Activated CD8-positive, alpha-beta T cell treated with anti-CD3 and anti-CD28 coated beads for 36 hours (primary cell): ENCODE measurements at regions of chr10 and their contacts with region 1.

Region 1: GRCh38 chr10:67779465-67780203 is 58.4 kb downstream of the DNAJC12 start:
- DNase-seq: peak; percentile 79
- ATAC-seq: peak; percentile 75
- H3K4me3 Mint-ChIP-seq: no peak overlapping the region
- H3K27ac Mint-ChIP-seq: no peak overlapping the region
- H3K4me1 Mint-ChIP-seq: peaks cover 17% of the 10 kb centered on the region
- H3K27me3 Mint-ChIP-seq: no peaks in the 10 kb centered on the region
- CTCF ChIP-seq: peak; percentile 88

Region 2: DNA sequence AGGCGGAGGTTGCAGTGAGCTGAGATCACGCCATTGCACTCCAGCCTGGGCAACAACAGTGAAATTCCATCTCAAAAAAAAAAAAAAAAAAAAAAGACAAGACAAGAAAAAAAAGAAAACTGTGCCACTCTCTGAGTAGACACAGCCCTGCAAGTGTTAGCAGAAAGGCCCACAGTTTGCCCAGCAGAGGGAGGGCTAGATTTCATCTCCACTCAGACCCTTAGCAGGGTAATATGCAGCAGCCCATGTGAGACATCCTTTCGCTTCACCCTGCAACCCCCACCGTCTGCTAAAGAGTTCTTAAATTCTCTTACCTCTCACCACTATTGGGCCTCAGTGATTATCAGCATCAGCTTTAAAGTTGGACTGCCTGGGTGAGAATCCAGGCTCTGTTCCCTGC is 121.9 kb before region 1 on chr10:
- CTCF ChIA-PET with region 1: interaction called, 73 read pairs
- POLR2A ChIA-PET with region 1: no interaction called
- intact Hi-C with region 1: no loop called
- DNase-seq: no peak
- ATAC-seq: no peak
- H3K4me3 Mint-ChIP-seq: no peak overlapping the region
- H3K27ac Mint-ChIP-seq: no peak overlapping the region
- H3K4me1 Mint-ChIP-seq: no peaks in the 10 kb centered on the region
- H3K27me3 Mint-ChIP-seq: peaks cover 8% of the 10 kb centered on the region
- CTCF ChIP-seq: no peak

Region 3: DNA sequence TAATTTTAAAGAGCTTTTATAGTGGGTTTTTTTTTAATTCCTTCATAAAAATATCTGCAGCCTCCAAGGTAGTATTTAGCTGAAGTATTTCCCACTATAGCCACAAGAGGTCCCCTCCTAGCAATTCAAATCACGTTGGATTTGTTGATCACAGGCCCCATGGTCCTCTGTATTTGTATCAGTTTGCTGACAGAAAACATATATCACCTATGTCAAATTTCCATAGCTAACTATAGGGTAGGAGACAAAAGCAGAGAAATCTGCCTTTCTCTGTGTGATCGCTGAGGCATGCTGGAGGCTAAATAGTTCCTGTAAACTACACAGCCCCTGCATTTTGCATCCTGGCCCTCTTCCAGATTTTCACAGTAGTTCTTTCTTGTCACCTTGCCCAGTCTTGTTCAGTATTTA is 81.9 kb before region 1 on chr10:
- CTCF ChIA-PET with region 1: interaction called, 225 read pairs
- POLR2A ChIA-PET with region 1: no interaction called
- intact Hi-C with region 1: loop called (anchors 1 kb)
- DNase-seq: peak; percentile 9
- ATAC-seq: peak; percentile 83
- H3K4me3 Mint-ChIP-seq: no peak overlapping the region
- H3K27ac Mint-ChIP-seq: no peak overlapping the region
- H3K4me1 Mint-ChIP-seq: no peaks in the 10 kb centered on the region
- H3K27me3 Mint-ChIP-seq: peaks cover 28% of the 10 kb centered on the region
- CTCF ChIP-seq: peak; percentile 75

Region 4: GRCh38 chr10:67723601-67724000 is 56.0 kb before region 1 on chr10:
- CTCF ChIA-PET with region 1: interaction called, 12 read pairs
- POLR2A ChIA-PET with region 1: no interaction called
- intact Hi-C with region 1: no loop called
- DNase-seq: no peak
- ATAC-seq: no peak
- H3K4me3 Mint-ChIP-seq: no peak overlapping the region
- H3K27ac Mint-ChIP-seq: no peak overlapping the region
- H3K4me1 Mint-ChIP-seq: no peaks in the 10 kb centered on the region
- H3K27me3 Mint-ChIP-seq: no peaks in the 10 kb centered on the region
- CTCF ChIP-seq: no peak

Region 5: DNA sequence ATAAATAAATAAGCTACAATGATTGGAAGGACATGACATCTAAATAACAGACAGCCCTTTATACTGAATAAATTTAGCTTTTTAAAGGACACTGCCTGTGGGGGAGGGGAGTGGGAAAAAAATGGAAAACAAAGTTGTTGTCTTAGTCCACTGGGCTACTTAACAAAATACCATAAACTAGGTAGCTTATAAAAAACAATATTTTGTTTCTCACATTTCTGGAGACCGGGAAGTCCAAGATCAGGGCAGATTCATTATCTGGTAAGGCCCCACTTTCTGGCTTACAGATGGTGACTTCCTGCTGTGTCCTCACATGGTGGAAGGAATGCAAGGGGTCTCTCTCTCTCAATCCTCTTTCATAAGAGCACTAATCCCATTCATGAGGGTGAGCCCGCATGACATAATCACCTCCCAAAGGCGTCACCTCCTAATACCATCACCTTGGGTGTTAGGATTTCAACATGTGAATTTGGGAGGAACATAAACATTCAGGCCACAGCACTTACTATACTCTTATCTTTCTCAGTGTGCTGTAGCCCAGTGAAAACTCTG is 15.4 kb after region 1 on chr10:
- CTCF ChIA-PET with region 1: interaction called, 58 read pairs
- POLR2A ChIA-PET with region 1: no interaction called
- intact Hi-C with region 1: no loop called
- DNase-seq: no peak
- ATAC-seq: no peak
- H3K4me3 Mint-ChIP-seq: no peak overlapping the region
- H3K27ac Mint-ChIP-seq: no peak overlapping the region
- H3K4me1 Mint-ChIP-seq: peaks cover 17% of the 10 kb centered on the region
- H3K27me3 Mint-ChIP-seq: no peaks in the 10 kb centered on the region
- CTCF ChIP-seq: no peak

Region 6: GRCh38 chr10:67861750-67862460 is 82.3 kb after region 1 on chr10:
- CTCF ChIA-PET with region 1: no interaction called
- POLR2A ChIA-PET with region 1: no interaction called
- intact Hi-C with region 1: no loop called
- DNase-seq: no peak
- ATAC-seq: no peak
- H3K4me3 Mint-ChIP-seq: no peak overlapping the region
- H3K27ac Mint-ChIP-seq: no peak overlapping the region
- H3K4me1 Mint-ChIP-seq: no peaks in the 10 kb centered on the region
- H3K27me3 Mint-ChIP-seq: no peaks in the 10 kb centered on the region
- CTCF ChIP-seq: no peak